H1 (cell line): ENCODE measurements at regions of chr6 and their contacts with region 1.

Region 1: GRCh38 chr6:158819213-158819909 is at the start of gene EZR:
- DNase-seq: peak; percentile 71 to 86
- H3K4me3 ChIP-seq: peak within 1 kb of the TSS; percentile 69 to 88 (median 78)
- H3K27ac ChIP-seq: peak within 1 kb of the TSS; percentile 52; the same call in 1 of the 2 replicates
- H3K4me1 ChIP-seq: peaks cover 6 to 8% (median 8%) of the 10 kb centered on the region in 4 experiments; a peak in 5 of 7 replicates
- H3K27me3 ChIP-seq: peaks cover 0 to 7% (median 5%) of the 10 kb centered on the region in 4 experiments; a peak in 5 of 7 replicates
- CTCF ChIP-seq: no peak
- EP300 ChIP-seq: no peak; a peak in 1 of 3 replicates
- POLR2A ChIP-seq: peak; percentile 83 to 93
- RAD21 ChIP-seq: peak in 1 of 2 experiments; percentile 21; a peak in 1 of 4 replicates
- total RNA-seq, gene EZR: 286 and 287 TPM in 2 replicates

Region 2: GRCh38 chr6:158744986-158745430 is 74.4 kb before region 1 on chr6:
- CTCF ChIA-PET with region 1: no interaction called
- POLR2A ChIA-PET with region 1: no interaction called
- DNase-seq: no peak
- H3K4me3 ChIP-seq: no peak overlapping the region
- H3K27ac ChIP-seq: no peak overlapping the region
- H3K4me1 ChIP-seq: no peaks in the 10 kb centered on the region
- H3K27me3 ChIP-seq: no peaks in the 10 kb centered on the region
- CTCF ChIP-seq: no peak
- EP300 ChIP-seq: no peak
- POLR2A ChIP-seq: no peak
- RAD21 ChIP-seq: no peak

Region 3: GRCh38 chr6:158808941-158809678 is 10.3 kb before region 1 on chr6:
- CTCF ChIA-PET with region 1: interaction called, 3 read pairs
- POLR2A ChIA-PET with region 1: interaction called, 23 read pairs
- DNase-seq: no peak
- H3K4me3 ChIP-seq: no peak overlapping the region
- H3K27ac ChIP-seq: no peak overlapping the region
- H3K4me1 ChIP-seq: peaks cover 11 to 41% (median 37%) of the 10 kb centered on the region in 4 experiments
- H3K27me3 ChIP-seq: no peaks in the 10 kb centered on the region
- CTCF ChIP-seq: no peak
- EP300 ChIP-seq: no peak
- POLR2A ChIP-seq: no peak
- RAD21 ChIP-seq: no peak